ENCODE measurements at regions of chr2 and their contacts with region 1.

Region 1: DNA sequence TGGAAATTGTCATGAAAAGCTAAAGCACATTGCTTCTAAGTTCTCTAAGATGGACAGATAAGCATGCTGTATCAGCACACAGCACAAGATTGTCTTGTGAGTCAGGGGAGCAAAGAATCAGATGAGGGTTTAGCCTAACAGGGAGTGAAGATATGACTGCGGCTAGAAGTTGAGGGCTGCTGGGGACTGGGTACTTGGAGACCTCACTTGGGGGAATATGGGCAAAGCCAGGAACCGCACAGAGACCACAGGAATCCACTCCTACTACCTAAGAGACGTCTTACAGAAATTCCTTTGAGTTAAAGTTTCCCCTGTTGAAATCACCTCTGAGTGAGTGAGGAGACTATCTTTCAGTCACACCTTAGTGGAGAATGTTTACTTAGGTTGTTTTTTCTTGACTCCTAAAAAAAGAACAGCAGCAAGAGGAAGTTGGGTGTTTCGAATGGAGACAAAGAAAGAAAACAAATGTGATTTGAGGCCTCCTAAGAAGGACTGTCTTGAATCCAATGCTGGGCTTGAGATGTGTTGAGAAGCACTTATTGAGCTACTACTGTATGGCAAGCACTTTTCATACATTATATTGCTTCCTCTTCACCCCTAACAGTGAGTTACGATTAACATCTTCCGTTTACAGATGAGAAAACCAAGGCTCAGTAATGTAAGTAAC is 100.7 kb downstream of the ANKRD44 start:
- DNase-seq: peak in 5 of 9 donors; percentile 34 to 73 (median 50)
- ATAC-seq: peak; percentile 23
- H3K4me3 ChIP-seq: peak overlapping the region; percentile 12
- H3K4me3 Mint-ChIP-seq: peak overlapping the region; percentile 61 to 86 (median 78)
- H3K27ac ChIP-seq: peak overlapping the region; percentile 82
- H3K27ac Mint-ChIP-seq: peak overlapping the region; percentile 79 to 100 (median 98)
- H3K4me1 ChIP-seq: peaks cover 93 to 98% of the 10 kb centered on the region in 2 donors
- H3K4me1 Mint-ChIP-seq: peaks cover 76 to 99% (median 97%) of the 10 kb centered on the region in 7 donors
- H3K27me3 ChIP-seq: no peaks in the 10 kb centered on the region
- H3K27me3 Mint-ChIP-seq: no peaks in the 10 kb centered on the region

Region 2: GRCh38 chr2:197255543-197255942 is 45.7 kb after region 1 on chr2:
- CTCF ChIA-PET with region 1: interaction called, 3 read pairs
- POLR2A ChIA-PET with region 1: interaction called, 41 read pairs
- intact Hi-C with region 1: loop called (anchors 1 to 2 kb)
- DNase-seq: peak in 7 of 9 donors; percentile 47 to 83 (median 56)
- ATAC-seq: peak; percentile 96
- H3K4me3 ChIP-seq: peak overlapping the region; percentile 38
- H3K4me3 Mint-ChIP-seq: peak overlapping the region; percentile 69 to 88 (median 77)
- H3K27ac ChIP-seq: peak overlapping the region; percentile 80
- H3K27ac Mint-ChIP-seq: peak overlapping the region; percentile 84 to 98 (median 94)
- H3K4me1 ChIP-seq: peaks cover 68 to 74% of the 10 kb centered on the region in 2 donors
- H3K4me1 Mint-ChIP-seq: peaks cover 58 to 98% (median 82%) of the 10 kb centered on the region in 7 donors
- H3K27me3 ChIP-seq: no peaks in the 10 kb centered on the region
- H3K27me3 Mint-ChIP-seq: no peaks in the 10 kb centered on the region

Region 3: DNA sequence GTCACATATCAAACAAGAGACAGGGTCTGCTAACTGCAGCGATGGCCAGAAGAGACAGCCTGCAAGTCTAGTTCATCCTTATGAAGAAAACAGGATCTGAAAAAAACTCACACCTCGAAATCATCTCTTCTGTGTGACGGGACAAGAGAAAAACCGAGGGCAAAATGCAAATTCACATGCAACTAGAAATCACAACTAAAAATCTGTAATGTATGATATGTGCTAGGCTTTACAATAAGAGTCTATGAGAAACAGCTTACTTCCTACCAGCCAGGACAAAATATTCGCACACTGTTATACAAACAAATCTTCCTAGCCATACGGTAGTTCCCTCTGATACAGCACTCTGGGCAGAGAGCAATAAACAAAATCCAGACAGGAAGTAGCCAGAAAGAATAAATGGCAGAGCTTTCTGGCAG is 51.9 kb after region 1 on chr2:
- CTCF ChIA-PET with region 1: interaction called, 3 read pairs
- POLR2A ChIA-PET with region 1: interaction called, 41 read pairs
- intact Hi-C with region 1: loop called (anchors 1 to 2 kb)
- DNase-seq: peak in 3 of 9 donors; percentile 30 to 35 (median 34)
- ATAC-seq: peak; percentile 45
- H3K4me3 ChIP-seq: peak overlapping the region; percentile 43
- H3K4me3 Mint-ChIP-seq: peak overlapping the region in 9 of 10 donors; percentile 64 to 85 (median 70)
- H3K27ac ChIP-seq: peak overlapping the region; percentile 54
- H3K27ac Mint-ChIP-seq: peak overlapping the region; percentile 86 to 96 (median 93)
- H3K4me1 ChIP-seq: peaks cover 79 to 81% of the 10 kb centered on the region in 2 donors
- H3K4me1 Mint-ChIP-seq: peaks cover 63 to 93% (median 84%) of the 10 kb centered on the region in 7 donors
- H3K27me3 ChIP-seq: no peaks in the 10 kb centered on the region
- H3K27me3 Mint-ChIP-seq: no peaks in the 10 kb centered on the region

Region 4: GRCh38 chr2:197293252-197294007 is 83.6 kb after region 1 on chr2:
- CTCF ChIA-PET with region 1: interaction called, 3 read pairs
- POLR2A ChIA-PET with region 1: interaction called, 13 read pairs
- intact Hi-C with region 1: no loop called
- DNase-seq: peak in 1 of 9 donors; percentile 49
- ATAC-seq: peak; percentile 80
- H3K4me3 ChIP-seq: peak overlapping the region; percentile 23
- H3K4me3 Mint-ChIP-seq: peak overlapping the region; percentile 74 to 97 (median 84)
- H3K27ac ChIP-seq: peak overlapping the region; percentile 69
- H3K27ac Mint-ChIP-seq: peak overlapping the region; percentile 87 to 99 (median 95)
- H3K4me1 ChIP-seq: peaks cover 87 to 93% of the 10 kb centered on the region in 2 donors
- H3K4me1 Mint-ChIP-seq: peaks cover 71 to 96% (median 91%) of the 10 kb centered on the region in 7 donors
- H3K27me3 ChIP-seq: no peaks in the 10 kb centered on the region
- H3K27me3 Mint-ChIP-seq: no peaks in the 10 kb centered on the region